PC-9 (cell line): ENCODE measurements at regions of chr12 and their contacts with region 1.

Region 1: DNA sequence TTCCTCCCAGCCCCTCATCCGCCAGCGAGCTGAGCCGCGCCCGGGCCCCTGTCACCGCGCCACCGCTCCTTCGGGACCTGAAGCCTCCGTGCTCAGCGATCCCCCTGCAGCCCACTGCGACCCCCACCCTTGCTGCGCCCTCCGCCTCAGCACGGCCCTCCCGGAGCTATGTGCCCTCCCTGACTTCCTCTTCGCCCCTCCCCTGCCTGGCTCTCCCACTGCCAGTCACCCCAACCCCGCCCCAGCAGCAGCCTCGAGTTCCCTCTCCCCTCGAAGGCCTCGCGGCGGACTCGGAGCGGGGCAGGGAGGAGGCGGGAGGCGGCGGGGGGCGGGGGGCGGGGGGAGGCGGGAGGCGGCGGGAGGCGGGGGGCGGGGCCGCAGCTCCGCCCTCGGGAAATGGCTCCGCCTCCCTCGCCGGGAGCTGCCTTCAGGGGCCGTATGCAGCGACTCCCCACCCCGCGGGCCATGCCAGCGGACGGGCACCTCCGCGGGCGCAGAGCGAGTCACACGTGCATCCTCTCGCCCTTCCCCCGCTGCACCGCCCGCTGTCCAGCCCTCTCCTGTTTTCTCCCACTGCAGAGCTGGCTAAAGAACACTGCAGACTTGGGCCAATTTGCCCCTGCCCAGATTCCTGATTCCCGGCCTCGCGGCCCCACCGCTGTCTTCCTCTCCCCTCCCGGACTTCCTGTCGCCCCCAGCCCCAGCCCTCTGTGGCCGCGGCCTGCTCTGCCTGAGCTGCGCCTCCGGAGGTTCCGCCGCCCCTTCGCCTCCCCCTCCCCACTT is 29.1 kb upstream of the ADIPOR2 start:
- DNase-seq: peak; percentile 86 to 98
- H3K4me3 ChIP-seq: no peak overlapping the region
- H3K27ac ChIP-seq: peak overlapping the region; percentile 57
- H3K4me1 ChIP-seq: peaks cover 16% of the 10 kb centered on the region
- H3K27me3 ChIP-seq: no peaks in the 10 kb centered on the region
- CTCF ChIP-seq: no peak

Region 2: GRCh38 chr12:1719139-1719538 is 57.4 kb after region 1 on chr12:
- CTCF ChIA-PET with region 1: no interaction called
- POLR2A ChIA-PET with region 1: interaction called, 16 read pairs
- intact Hi-C with region 1: no loop called
- DNase-seq: no peak
- H3K4me3 ChIP-seq: no peak overlapping the region
- H3K27ac ChIP-seq: no peak overlapping the region
- H3K4me1 ChIP-seq: 0 out of 2 replicates have a peak, but pooled peaks cover 5% of the 10 kb centered on the region
- H3K27me3 ChIP-seq: no peaks in the 10 kb centered on the region
- CTCF ChIP-seq: no peak

Region 3: DNA sequence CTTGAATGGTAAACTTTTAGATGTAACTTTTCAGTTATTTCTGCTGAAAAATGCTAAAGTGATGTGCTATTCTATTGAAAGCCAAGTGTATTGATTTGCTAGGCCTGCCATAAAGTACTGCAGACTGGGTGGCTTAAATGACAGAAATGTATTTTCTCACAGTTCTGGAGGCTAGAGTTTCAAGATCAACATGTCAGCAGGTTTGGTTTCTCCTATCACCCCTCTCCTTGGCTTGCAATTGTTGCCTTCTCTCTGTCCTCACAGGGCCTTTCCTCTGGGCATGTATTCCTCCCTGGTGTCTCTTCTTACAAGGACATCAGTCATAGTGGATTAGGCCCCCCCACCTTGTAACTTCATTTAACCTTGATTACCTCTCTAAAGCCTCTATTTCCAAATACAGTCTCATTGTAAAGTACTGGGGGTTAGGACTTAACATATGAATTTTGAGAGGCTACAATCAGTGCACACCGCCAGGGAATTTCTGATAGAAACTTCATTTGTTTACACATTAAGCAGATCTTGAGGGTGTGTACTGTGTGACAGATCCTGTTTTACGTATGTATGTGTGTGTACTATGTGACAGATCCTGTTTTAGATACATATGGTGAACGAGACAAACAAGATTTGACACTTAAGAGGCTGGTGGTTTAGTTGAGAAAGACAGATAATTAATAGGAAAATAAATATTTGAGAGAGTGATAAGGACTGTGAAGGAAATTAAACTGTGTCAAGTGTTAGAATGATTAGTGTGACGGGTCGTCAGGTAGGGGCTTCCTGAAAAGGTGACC is 78.6 kb after region 1 on chr12:
- CTCF ChIA-PET with region 1: no interaction called
- POLR2A ChIA-PET with region 1: interaction called, 18 read pairs
- intact Hi-C with region 1: no loop called
- DNase-seq: peak in 1 of 2 experiments; percentile 39
- H3K4me3 ChIP-seq: no peak overlapping the region
- H3K27ac ChIP-seq: 0 out of 2 replicates have a peak overlapping the region, but pooled peaks have one; percentile 17
- H3K4me1 ChIP-seq: peaks cover 14% of the 10 kb centered on the region; the same call in 1 of the 2 replicates
- H3K27me3 ChIP-seq: no peaks in the 10 kb centered on the region
- CTCF ChIP-seq: no peak